Ovary (tissue), 10 donors: ENCODE measurements at regions of chr3 and their contacts with region 1.

Region 1: GRCh38 chr3:64773137-64773536 is 85.3 kb upstream of the ADAMTS9 start:
- DNase-seq: no peak
- H3K4me3 ChIP-seq: no peak overlapping the region
- H3K27ac ChIP-seq: no peak overlapping the region
- H3K4me1 ChIP-seq: peaks cover 3% of the 10 kb centered on the region
- H3K27me3 ChIP-seq: no peaks in the 10 kb centered on the region
- CTCF ChIP-seq: no peak
- EP300 ChIP-seq: no peak
- POLR2A ChIP-seq: no peak

Region 2: GRCh38 chr3:64717872-64718613 is 55.1 kb before region 1 on chr3:
- intact Hi-C with region 1: loop called in 1 of 4 experiments (anchors 2 kb)
- DNase-seq: no peak
- H3K4me3 ChIP-seq: no peak overlapping the region
- H3K27ac ChIP-seq: no peak overlapping the region
- H3K4me1 ChIP-seq: peaks cover 13% of the 10 kb centered on the region
- H3K27me3 ChIP-seq: no peaks in the 10 kb centered on the region
- CTCF ChIP-seq: peak in 1 of 3 donors; percentile 18
- EP300 ChIP-seq: no peak
- POLR2A ChIP-seq: no peak